Left colon (tissue), 2 donors: ENCODE measurements at regions of chr11 and their contacts with region 1.

Region 1: DNA sequence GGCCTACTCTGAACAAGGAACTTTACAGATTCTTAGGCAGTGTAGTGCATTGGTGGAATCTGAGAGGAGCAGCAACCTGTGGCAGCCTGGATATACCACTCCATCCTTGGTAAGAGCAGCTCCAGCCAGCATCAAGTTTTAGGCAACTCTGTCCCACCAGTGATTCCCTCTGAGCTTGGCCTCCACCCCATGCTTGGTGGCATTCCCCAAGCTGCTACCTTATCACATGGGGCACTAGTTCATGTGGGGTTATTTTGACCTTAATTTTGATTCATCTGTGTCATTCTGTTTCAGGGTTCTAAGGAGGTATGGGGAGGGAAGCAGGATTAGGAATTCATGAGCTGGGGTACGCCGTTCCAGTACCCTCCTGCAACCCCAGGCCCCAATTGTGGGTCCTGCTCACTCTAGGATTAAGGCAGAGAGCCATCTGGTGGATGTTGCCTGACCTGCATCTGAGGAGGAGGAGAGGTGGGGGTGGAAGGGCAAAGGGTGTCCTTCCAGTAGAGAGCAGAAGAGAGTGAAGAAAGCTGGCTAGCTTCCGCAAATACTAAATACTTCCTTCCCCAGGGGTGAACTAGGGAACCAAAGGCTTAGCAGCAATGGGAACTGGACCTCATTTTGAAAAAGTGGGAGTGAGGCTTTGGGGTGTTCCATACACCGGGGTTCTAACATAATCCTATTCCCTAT is 10.5 kb downstream of the LRRC51 start:
- DNase-seq: peak; percentile 79 to 84
- ATAC-seq: peak; percentile 95

Region 2: DNA sequence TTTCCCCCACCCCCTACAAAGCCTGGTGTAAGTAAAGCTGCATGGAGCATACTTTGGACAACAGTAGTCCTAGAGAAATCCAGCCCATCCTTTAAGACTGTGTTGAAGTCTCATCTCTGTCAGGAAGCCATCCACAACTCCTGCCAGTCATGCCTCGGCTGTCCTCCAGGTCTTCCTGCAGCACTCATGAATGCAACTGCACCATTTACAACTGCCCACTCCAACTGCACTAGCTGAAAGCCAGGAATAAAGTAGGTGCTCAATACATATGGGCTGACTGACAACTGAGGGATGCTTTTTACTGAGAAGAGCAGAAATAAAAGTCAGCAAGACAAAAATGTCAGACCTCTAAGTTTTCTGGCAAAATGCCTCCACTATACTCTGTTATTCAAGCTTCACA is 65.1 kb before region 1 on chr11:
- intact Hi-C with region 1: loop called in 1 of 2 experiments (anchors 1 kb)
- DNase-seq: no peak
- ATAC-seq: no peak

Region 3: GRCh38 chr11:72160319-72160718 is 69.2 kb after region 1 on chr11:
- intact Hi-C with region 1: no loop called
- DNase-seq: no peak
- ATAC-seq: no peak

Region 4: DNA sequence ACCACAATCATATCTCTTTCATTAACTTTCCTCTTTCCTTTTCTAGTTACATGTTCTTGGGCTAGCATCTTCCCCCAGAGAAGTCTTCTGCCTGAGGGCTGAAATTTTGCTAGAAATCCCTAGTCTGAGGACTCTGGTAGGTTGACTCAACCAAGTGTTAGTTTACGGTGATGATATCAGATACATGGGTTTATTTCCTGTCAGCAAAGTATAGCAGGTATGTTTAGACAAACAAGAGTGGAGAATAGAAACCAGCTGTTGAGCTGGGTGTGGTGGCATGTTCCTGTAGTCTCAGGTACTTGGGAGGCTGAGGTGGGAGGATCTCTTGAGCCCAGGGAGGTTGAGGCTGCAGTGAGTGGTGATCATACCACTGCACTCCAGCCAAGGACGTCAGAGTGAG is 112.0 kb after region 1 on chr11:
- intact Hi-C with region 1: no loop called
- DNase-seq: no peak
- ATAC-seq: peak; percentile 49

Region 5: DNA sequence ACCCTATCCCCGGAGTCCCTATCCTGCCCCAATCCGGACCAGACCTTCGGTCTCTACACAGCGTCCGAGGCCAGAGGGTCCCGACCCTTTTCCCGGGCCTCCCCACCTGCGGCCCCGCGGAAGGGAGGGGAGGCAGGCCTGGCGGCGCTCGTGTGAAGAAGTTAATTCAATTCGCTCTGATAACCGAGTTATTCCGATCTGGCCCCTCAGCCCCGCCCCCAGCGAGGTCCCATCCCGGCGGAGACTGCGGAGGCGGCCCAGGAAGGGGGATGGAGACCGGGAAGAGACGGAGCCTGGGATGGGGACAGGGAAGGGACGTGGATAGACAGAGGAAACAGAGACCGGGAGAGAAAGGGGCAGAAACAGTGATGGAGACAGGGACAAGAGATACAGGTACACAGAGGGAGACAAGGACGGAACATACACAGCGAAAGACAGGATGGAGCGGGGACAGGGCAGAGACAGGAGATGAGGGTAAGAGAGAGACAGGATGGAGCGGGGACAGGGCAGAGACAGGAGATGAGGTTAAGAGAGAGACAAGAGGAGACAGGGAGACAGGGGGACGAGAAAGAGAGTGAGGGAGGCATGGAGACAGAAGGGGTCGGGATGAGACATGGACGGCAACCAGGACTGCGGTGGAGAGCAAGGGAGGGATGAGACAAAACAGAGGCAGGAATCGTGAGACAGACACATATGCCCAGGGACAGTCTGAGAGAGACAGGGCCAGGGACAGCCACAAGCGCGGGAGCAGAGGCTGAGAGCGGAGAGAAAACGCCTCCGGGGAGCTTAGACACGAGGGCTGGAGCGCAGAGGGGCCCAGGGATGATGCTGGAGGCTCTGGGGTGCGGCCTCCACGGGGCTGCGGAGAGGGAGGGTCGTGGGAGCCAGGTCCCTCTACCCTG is 153.5 kb after region 1 on chr11:
- intact Hi-C with region 1: no loop called
- DNase-seq: no peak
- ATAC-seq: no peak